ENCODE measurements at regions of chr17 and their contacts with region 1.

Region 1: DNA sequence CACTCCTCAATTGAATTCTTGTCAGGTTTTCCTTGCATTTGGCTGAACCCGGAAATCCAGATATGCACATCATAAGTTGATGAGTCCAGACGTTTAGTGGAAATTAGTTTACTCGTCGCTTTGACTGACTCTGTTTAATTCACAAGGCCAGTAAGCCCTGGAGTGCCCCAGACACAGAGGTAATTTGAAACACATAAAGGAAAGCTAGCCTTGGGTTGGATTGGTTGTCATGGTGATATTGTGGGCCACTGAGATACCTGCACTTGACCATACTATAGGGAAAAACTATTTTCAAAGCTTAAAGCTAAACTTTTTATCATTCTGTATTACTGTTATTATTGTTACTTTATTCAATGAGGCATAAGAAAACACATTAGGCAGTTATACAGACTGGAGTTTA is 178.3 kb upstream of the CA10 start:
- DNase-seq: no peak
- H3K4me3 ChIP-seq: no peak overlapping the region
- H3K27ac ChIP-seq: no peak overlapping the region
- H3K4me1 ChIP-seq: no peaks in the 10 kb centered on the region
- H3K27me3 ChIP-seq: no peaks in the 10 kb centered on the region
- CTCF ChIP-seq: no peak
- EP300 ChIP-seq: no peak
- POLR2A ChIP-seq: no peak

Region 2: GRCh38 chr17:52789829-52790228 is 453.0 kb after region 1 on chr17:
- intact Hi-C with region 1: loop called in 1 of 4 experiments (anchors 5 kb)
- DNase-seq: no peak
- H3K4me3 ChIP-seq: no peak overlapping the region
- H3K27ac ChIP-seq: no peak overlapping the region
- H3K4me1 ChIP-seq: no peaks in the 10 kb centered on the region
- H3K27me3 ChIP-seq: no peaks in the 10 kb centered on the region
- CTCF ChIP-seq: no peak
- EP300 ChIP-seq: no peak
- POLR2A ChIP-seq: no peak